Right ventricle myocardium inferior (tissue), 1 donor: ENCODE measurements at regions of chr3 and their contacts with region 1.

Region 1: DNA sequence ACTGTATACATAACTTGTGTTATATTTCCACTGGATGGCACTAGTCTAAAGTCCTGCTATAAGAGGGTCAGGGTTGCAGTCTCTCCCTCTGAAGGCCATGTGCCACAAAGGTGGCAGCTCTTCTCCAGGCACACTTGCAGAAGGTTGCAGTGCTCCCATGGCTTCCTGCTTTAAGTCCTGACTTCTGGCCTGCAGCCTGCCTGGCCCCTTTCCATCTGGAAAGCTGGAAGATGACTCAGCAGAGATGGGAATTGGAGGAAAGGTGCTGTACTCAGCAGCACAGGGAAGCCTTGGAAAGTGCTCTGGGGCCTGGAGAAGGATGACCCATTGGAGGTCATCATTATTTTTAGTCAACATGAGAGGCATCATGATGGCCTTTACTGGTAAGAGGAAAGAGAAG is 40.9 kb upstream of the MRPL3 start:
- DNase-seq: peak; percentile 71
- ATAC-seq: peak; percentile 94

Region 2: DNA sequence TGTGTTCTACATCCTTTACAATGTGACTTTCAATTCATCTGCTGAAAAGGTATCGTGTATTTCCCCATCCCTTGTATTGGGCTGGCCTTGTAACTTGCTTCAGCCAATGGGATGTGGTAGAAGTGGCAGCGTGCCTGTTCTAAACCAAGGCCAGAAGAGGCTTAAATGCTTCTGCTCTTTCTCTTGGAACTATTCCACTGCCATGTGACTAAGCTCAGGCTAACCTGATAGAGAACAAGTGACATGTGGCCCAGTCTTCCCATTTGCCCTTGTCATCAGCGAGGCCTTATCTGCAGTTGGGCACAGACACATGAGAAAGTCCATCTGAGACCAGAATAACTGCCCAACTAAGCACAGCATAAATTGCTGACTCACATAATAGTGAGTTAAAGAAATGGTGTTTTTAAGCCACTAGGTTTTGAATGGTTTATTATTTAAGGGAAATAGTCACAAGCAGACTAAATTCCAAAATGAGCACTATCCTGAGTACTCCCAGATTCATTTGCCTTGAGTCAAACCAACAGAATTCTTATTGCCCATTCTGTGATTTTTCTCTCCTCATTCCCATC is 260.9 kb after region 1 on chr3:
- intact Hi-C with region 1: loop called (anchors 5 kb)
- DNase-seq: peak; percentile 47
- ATAC-seq: peak; percentile 96

Region 3: DNA sequence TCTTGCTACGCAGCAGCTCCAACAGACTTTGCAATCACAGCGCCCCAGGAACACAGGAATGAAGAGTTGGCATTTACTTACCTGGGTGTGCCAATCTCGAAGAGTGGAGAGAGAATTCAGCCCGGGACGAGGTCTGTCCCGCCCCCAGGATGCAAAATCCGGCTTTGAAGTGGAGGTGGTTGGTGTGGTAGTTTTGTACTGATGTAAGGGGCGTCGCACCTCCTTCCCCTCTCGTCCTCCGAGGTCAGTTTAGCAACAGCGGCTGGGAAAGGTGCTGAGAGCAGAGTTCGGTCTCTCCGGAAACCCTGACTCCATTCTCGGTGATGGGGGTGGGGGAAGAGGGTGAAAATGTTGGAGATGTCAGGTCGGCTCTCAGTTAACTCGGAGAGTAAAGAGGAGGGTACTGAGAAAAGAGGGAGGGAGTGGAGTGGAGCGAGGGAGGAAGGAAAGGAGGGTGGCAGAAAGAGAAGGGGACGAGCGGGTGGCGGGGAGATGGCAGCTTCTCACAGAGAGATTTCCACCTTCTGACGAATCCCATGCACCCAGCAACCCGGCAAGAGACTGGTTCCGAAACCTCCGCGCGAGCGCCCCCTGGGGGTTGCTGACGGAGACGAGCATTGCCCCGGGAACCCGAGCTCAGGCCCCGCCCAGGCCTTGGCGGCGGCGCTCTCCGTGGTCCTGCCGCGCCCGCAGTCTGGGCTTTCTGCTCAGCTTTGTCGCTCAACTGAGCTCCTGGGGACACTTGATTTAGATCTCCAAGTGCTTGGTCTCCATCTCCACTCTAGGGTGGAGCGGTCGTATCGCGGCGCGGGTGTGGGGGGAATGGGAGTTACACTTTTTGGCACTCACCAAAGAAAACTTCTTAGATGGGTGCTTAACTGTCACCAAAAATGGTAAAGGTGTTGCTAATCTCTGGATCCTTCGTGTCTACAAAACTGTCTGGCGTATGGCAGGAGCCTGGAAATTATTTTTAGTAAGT is 491.1 kb after region 1 on chr3 and contains the start of gene CPNE4:
- intact Hi-C with region 1: loop called (anchors 10 kb)
- DNase-seq: peak; percentile 87
- ATAC-seq: peak; percentile 90
- total RNA-seq, gene CPNE4: 41.0 TPM